Ovary (tissue), 10 donors: ENCODE measurements at regions of chr20 and their contacts with region 1.

Region 1: DNA sequence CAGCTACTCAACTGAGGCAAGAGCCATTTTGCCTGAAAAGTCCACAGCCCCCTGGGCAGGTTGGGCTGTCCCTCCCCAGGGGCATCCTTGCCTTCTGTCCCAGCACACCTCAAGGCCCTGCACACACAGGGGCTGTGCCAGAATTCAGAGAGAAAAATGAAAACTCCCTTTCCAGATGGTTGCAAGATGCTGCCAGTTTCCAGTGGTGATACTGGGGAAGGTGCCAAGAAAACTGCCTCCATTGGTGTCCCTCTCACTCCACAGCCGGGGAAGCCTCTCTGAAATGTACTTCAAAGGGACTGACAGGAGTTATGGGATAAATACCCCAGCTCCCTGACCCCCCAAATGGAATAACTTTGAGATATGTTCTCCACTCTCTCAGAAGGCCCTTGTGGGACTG is 154.2 kb upstream of the MAFB start:
- DNase-seq: no peak
- H3K4me3 ChIP-seq: no peak overlapping the region
- H3K27ac ChIP-seq: no peak overlapping the region
- H3K4me1 ChIP-seq: no peaks in the 10 kb centered on the region
- H3K27me3 ChIP-seq: no peaks in the 10 kb centered on the region
- CTCF ChIP-seq: no peak
- EP300 ChIP-seq: no peak
- POLR2A ChIP-seq: no peak

Region 2: GRCh38 chr20:40073535-40074111 is 769.6 kb before region 1 on chr20:
- intact Hi-C with region 1: no loop called
- DNase-seq: no peak
- H3K4me3 ChIP-seq: no peak overlapping the region
- H3K27ac ChIP-seq: no peak overlapping the region
- H3K4me1 ChIP-seq: no peaks in the 10 kb centered on the region
- H3K27me3 ChIP-seq: no peaks in the 10 kb centered on the region
- CTCF ChIP-seq: no peak
- EP300 ChIP-seq: no peak
- POLR2A ChIP-seq: no peak

Region 3: GRCh38 chr20:40776466-40777457 is 66.5 kb before region 1 on chr20:
- intact Hi-C with region 1: loop called in 1 of 4 experiments (anchors 2 kb)
- DNase-seq: no peak
- H3K4me3 ChIP-seq: no peak overlapping the region
- H3K27ac ChIP-seq: no peak overlapping the region
- H3K4me1 ChIP-seq: no peaks in the 10 kb centered on the region
- H3K27me3 ChIP-seq: no peaks in the 10 kb centered on the region
- CTCF ChIP-seq: no peak
- EP300 ChIP-seq: no peak
- POLR2A ChIP-seq: no peak